ENCODE measurements at regions of chr10 and their contacts with region 1.

Region 1: GRCh38 chr10:84696610-84697009 is 368.2 kb downstream of the CCSER2 start:
- DNase-seq: no peak
- H3K4me3 ChIP-seq: no peak overlapping the region
- H3K27ac ChIP-seq: no peak overlapping the region
- H3K4me1 ChIP-seq: no peaks in the 10 kb centered on the region
- H3K27me3 ChIP-seq: no peaks in the 10 kb centered on the region
- CTCF ChIP-seq: no peak
- POLR2A ChIP-seq: no peak

Region 2: GRCh38 chr10:84811078-84811477 is 114.5 kb after region 1 on chr10:
- intact Hi-C with region 1: no loop called
- DNase-seq: no peak
- H3K4me3 ChIP-seq: no peak overlapping the region
- H3K27ac ChIP-seq: no peak overlapping the region
- H3K4me1 ChIP-seq: no peaks in the 10 kb centered on the region
- H3K27me3 ChIP-seq: no peaks in the 10 kb centered on the region
- CTCF ChIP-seq: no peak
- POLR2A ChIP-seq: no peak

Region 3: DNA sequence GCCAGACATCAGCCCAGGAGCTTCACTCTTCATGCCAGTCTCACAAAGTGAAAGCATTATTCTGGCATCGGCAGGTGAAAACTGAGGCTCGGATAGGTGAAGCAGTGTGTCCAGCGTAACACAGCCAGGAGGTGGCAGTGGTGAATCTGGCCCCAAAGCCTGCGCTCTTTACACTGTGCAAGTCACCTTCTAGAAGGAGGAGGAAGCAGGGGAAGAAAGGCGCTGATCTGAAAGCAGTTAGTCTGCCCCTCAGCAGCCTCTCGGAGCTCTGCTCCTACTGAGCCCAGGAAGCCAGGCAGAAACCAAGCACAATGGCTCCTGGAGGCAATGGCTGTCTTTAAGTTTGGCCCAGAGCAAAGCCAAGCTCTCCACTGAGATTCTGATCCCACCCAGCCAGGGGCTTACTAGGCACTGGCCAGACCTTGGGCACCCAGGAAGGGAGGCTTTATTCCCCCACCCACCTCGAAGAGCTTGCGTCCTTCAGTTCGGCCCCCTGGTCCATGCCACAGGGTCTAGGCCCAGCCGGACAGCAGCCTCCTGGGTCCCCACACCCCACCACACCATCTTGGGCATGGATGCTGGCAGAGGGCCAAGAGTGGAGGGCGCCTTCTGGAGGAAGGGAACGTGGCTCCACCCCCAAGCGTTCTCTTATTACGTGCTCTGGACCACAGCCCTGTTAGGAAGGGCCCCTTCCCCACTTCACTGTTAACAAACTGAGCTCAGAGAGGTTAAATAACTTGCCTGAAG is 1565.5 kb after region 1 on chr10:
- intact Hi-C with region 1: loop called (anchors 10 kb)
- DNase-seq: peak in 1 of 2 donors; percentile 16
- H3K4me3 ChIP-seq: peak overlapping the region in 1 of 3 donors; percentile 9
- H3K27ac ChIP-seq: no peak overlapping the region
- H3K4me1 ChIP-seq: no peaks in the 10 kb centered on the region
- H3K27me3 ChIP-seq: no peaks in the 10 kb centered on the region
- CTCF ChIP-seq: no peak
- POLR2A ChIP-seq: no peak

Measured in breast epithelium (tissue), 4 donors.